ENCODE measurements at regions of chr20 and their contacts with region 1.

Region 1: GRCh38 chr20:5569021-5569420 is 181.2 kb upstream of the SHLD1 start:
- DNase-seq: peak; percentile 7 to 13
- H3K4me3 ChIP-seq: no peak overlapping the region
- H3K27ac ChIP-seq: no peak overlapping the region
- H3K4me1 ChIP-seq: no peaks in the 10 kb centered on the region
- H3K27me3 ChIP-seq: no peaks in the 10 kb centered on the region
- CTCF ChIP-seq: peak in 4 of 6 experiments; percentile 16 to 61 (median 50)
- POLR2A ChIP-seq: no peak

Region 2: DNA sequence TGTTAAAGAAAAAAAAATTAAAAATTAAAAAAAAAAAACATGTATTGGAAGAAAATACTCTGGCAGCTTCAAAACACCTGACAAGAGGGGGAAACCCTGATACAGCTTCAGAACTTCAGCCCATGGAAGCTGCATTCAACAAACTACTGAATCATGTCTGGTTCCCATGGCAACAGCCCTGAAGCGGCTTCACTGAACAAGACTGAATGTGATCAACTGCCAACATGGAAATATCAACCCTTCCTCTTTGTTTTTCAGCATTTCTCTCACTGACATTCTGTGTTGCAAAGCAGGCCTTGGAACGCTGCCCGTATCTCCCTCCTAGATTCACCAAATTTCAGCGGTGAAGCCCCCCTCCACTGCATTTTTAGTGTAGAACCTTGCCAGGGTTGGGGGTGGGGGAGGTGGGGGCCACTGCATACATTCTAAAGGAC is 89.9 kb after region 1 on chr20:
- intact Hi-C with region 1: no loop called
- DNase-seq: peak; percentile 89 to 90
- H3K4me3 ChIP-seq: no peak overlapping the region
- H3K27ac ChIP-seq: peak overlapping the region; percentile 62 to 89 (median 85)
- H3K4me1 ChIP-seq: peaks cover 36 to 43% of the 10 kb centered on the region in 2 donors
- H3K27me3 ChIP-seq: no peaks in the 10 kb centered on the region
- CTCF ChIP-seq: no peak
- POLR2A ChIP-seq: no peak

Region 3: GRCh38 chr20:5797843-5798462 is 228.9 kb after region 1 on chr20:
- intact Hi-C with region 1: loop called (anchors 10 kb)
- DNase-seq: no peak
- H3K4me3 ChIP-seq: no peak overlapping the region
- H3K27ac ChIP-seq: no peak overlapping the region
- H3K4me1 ChIP-seq: peaks cover 5 to 7% of the 10 kb centered on the region in 2 donors
- H3K27me3 ChIP-seq: no peaks in the 10 kb centered on the region
- CTCF ChIP-seq: no peak
- POLR2A ChIP-seq: no peak